ENCODE measurements at regions of chr18 and their contacts with region 1.

Region 1: DNA sequence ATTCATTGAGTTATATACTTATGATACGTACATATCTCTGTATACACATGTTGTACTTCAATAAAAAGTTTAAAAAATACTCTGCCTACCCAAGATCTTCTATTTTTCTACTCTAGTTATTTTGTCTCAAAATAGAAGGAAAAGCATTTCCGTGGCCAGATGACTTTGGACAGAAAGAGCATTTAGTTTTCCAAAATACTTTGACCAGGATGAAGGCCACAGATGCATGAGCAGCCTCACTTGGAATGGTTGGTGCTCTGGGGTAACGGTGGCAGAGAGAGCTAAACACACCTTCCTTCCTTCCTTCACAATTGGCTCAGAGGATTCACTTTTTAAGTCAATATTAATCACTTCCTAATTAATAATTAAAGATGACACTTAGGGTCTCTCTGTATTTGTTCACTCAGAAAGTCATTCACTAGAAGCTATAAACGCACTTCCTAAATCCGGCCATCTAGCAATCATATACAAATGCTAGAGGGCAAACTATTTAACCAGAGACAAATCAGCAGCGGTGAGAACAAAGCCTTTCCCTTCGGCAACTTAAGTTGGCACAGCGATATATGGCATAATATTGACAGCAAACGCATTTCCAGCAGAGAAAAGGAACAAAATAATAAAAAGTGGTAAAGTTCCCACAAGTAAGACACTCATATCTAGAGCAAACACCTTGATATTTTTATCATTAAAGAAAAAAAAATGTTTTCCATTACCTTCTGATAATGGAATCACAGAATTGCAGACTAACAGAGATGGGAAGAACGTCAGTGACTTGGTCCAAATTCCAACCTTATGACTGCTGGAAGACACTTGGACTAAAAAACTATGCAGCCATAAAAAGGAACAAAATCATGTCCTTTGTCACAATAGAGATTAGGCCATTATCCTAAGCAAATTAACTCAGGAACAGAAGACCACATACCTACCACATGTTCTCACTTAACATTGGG is 55.9 kb upstream of the NARS1 start:
- DNase-seq: no peak
- H3K4me3 ChIP-seq: no peak overlapping the region
- H3K27ac ChIP-seq: peak overlapping the region in 1 of 3 donors; percentile 20
- H3K4me1 ChIP-seq: no peaks in the 10 kb centered on the region
- H3K27me3 ChIP-seq: no peaks in the 10 kb centered on the region
- CTCF ChIP-seq: no peak
- POLR2A ChIP-seq: no peak

Region 2: DNA sequence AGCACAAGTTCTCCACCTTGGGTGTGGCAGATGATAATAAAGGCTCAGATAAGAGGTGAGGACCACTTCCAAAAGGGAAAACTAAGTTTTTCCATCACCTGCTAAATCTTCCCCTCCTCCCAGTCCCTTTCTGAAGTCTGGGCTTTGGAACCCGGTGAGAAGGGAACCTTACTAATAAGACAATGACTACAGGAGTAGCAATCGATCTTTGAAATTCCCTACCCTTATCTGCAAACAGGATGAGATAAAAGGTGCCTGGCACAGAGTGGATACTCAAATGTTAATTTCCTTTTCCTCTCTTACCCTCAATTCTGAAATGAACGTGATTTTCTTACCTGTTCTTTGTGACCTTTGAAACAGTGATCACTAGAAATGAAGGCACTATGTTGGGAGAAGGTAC is 13.8 kb after region 1 on chr18:
- intact Hi-C with region 1: loop called (anchors 2 kb)
- DNase-seq: no peak
- H3K4me3 ChIP-seq: no peak overlapping the region
- H3K27ac ChIP-seq: peak overlapping the region in 1 of 3 donors; percentile 17
- H3K4me1 ChIP-seq: peaks cover 0 to 8% of the 10 kb centered on the region in 2 donors
- H3K27me3 ChIP-seq: no peaks in the 10 kb centered on the region
- CTCF ChIP-seq: no peak
- POLR2A ChIP-seq: no peak

Measured in thyroid gland (tissue), 4 donors.